CD8-positive, alpha-beta T cell (primary cell): ENCODE measurements at regions of chr2 and their contacts with region 1.

Region 1: GRCh38 chr2:85678794-85679672 is 11.0 kb upstream of the SFTPB start:
- DNase-seq: peak; percentile 59 to 85 (median 75)
- ATAC-seq: peak; percentile 98
- H3K4me3 ChIP-seq: peak overlapping the region in 1 of 2 experiments; percentile 19
- H3K4me3 Mint-ChIP-seq: no peak overlapping the region
- H3K27ac ChIP-seq: no peak overlapping the region
- H3K27ac Mint-ChIP-seq: no peak overlapping the region
- H3K4me1 ChIP-seq: peaks cover 7% of the 10 kb centered on the region
- H3K4me1 Mint-ChIP-seq: no peaks in the 10 kb centered on the region
- H3K27me3 ChIP-seq: no peaks in the 10 kb centered on the region
- H3K27me3 Mint-ChIP-seq: peaks cover 2% of the 10 kb centered on the region
- CTCF ChIP-seq: peak; percentile 91

Region 2: GRCh38 chr2:85589982-85590791 is 88.8 kb before region 1 on chr2:
- CTCF ChIA-PET with region 1: no interaction called
- POLR2A ChIA-PET with region 1: interaction called, 3 read pairs
- intact Hi-C with region 1: loop called in 1 of 2 experiments (anchors 1 kb)
- DNase-seq: no peak
- ATAC-seq: no peak
- H3K4me3 ChIP-seq: no peak overlapping the region
- H3K4me3 Mint-ChIP-seq: no peak overlapping the region
- H3K27ac ChIP-seq: no peak overlapping the region
- H3K27ac Mint-ChIP-seq: no peak overlapping the region
- H3K4me1 ChIP-seq: peaks cover 26% of the 10 kb centered on the region
- H3K4me1 Mint-ChIP-seq: peaks cover 43% of the 10 kb centered on the region
- H3K27me3 ChIP-seq: no peaks in the 10 kb centered on the region
- H3K27me3 Mint-ChIP-seq: no peaks in the 10 kb centered on the region
- CTCF ChIP-seq: no peak

Region 3: DNA sequence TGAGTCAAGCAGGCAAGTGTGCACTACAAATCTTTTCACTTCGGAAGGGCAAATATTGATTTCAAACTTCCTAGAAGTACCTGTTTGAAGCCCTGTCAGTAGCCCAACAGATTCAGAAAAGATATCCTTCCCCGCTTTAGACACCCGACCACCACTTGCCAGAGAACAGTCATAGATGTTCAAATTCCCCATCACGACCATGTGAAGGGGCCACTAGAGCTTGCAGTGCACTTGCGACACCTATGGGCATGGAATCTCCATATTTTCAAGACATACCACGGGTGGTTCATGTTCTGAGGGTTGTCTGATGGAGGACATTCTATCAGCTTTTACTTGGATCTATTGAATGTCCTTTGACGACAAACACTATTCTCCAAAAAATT is 39.0 kb after region 1 on chr2:
- CTCF ChIA-PET with region 1: interaction called, 10 read pairs
- POLR2A ChIA-PET with region 1: no interaction called
- intact Hi-C with region 1: no loop called
- DNase-seq: no peak
- ATAC-seq: no peak
- H3K4me3 ChIP-seq: no peak overlapping the region
- H3K4me3 Mint-ChIP-seq: no peak overlapping the region
- H3K27ac ChIP-seq: no peak overlapping the region
- H3K27ac Mint-ChIP-seq: no peak overlapping the region
- H3K4me1 ChIP-seq: no peaks in the 10 kb centered on the region
- H3K4me1 Mint-ChIP-seq: peaks cover 5% of the 10 kb centered on the region
- H3K27me3 ChIP-seq: no peaks in the 10 kb centered on the region
- H3K27me3 Mint-ChIP-seq: no peaks in the 10 kb centered on the region
- CTCF ChIP-seq: no peak